Naive thymus-derived CD4-positive, alpha-beta T cell (primary cell): ENCODE measurements at regions of chr13 and their contacts with region 1.

Region 1: DNA sequence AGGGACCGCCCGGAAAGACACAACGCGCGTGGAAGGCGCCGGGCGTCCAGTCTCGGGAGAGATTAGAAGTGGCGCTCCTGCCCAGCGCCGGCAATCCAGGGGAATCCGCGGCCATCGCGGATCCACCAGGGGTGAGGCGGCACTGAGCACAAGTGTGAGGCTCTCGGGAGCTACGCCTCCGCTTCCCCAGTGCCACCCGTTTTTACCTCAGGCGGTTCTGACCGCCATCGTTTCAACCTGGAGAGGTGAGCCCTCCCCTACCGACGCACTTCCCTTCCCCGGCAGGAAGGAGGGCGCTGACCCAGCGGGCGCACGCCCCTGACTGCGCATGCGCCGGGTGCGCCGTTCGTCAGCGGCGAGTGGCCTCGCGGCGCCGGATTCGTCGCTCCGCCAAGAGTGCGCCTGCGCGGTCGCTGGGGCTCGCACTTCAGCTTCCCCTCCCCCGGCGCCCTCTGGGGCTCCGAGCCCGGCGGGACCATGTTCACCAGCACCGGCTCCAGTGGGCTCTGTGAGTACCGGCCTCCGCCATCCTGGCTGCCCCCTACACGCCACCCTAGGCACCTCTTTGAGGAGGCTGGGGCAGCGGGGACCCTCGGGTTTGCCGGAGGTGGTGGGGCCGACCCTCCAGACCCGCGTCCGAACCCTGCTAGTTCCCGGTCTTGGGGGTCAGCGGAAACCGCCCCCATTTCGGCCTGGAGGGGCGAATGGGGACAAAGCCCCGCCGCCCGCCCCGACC is at the start of gene UBAC2:
- DNase-seq: peak; percentile 95 to 99 (median 98)
- ATAC-seq: peak; percentile 88
- H3K4me3 ChIP-seq: peak within 1 kb of the TSS; percentile 74
- H3K4me3 Mint-ChIP-seq: peak within 1 kb of the TSS; percentile 90 to 100 (median 97)
- H3K27ac ChIP-seq: peak within 1 kb of the TSS; percentile 99
- H3K27ac Mint-ChIP-seq: peak within 1 kb of the TSS; percentile 92 to 98 (median 95)
- H3K4me1 ChIP-seq: peaks cover 38 to 51% of the 10 kb centered on the region in 2 donors
- H3K4me1 Mint-ChIP-seq: peaks cover 42 to 74% (median 61%) of the 10 kb centered on the region in 7 donors
- H3K27me3 ChIP-seq: no peaks in the 10 kb centered on the region
- H3K27me3 Mint-ChIP-seq: peaks cover 0 to 2% (median 0%) of the 10 kb centered on the region in 5 donors
- total RNA-seq, gene UBAC2: 63.3 to 114 (median 90.2) TPM

Region 2: DNA sequence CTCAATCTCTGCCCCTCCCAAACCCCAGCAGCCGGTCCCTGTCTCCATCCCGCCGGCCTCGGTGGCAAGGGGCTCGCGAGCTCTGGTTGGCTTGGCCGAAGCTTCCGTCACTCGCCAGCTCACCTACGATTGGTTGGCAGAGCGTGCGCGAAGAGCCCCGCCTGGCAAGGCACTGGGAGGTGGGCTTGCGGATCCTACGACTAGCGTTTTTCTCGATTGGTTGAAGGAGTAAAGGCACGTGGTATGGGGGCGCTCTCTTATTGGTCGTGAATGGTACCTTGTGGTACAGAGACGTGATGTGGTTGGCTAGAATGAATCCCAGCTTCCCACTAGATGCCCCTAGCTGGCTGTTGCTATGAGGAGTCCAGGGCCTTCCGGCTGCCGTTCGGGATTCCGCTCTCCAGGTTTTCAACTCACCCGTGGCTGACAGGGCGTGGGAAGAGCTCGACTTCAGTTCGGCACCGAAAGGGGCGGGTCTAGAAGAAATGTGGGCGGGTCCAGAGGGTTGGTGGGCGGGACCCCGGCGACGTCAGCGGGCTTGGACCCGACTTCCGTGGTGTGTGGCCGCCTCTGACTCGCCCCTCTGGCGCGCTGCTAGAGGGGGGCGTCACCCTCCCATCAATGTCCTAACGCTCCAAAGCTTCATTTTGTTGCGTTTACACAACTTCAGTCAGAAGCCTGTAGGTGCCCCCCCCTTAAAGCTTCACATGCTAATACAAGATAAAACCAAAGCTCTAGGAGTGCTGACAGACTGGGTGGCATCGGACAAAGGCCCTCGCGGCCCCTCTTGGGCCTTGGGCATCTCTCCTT is 1767.5 kb before region 1 on chr13:
- CTCF ChIA-PET with region 1: no interaction called
- POLR2A ChIA-PET with region 1: no interaction called
- intact Hi-C with region 1: loop called in 1 of 2 experiments (anchors 5 kb)
- DNase-seq: peak; percentile 97 to 99 (median 99)
- ATAC-seq: peak; percentile 85
- H3K4me3 ChIP-seq: peak overlapping the region; percentile 93
- H3K4me3 Mint-ChIP-seq: peak overlapping the region; percentile 90 to 99 (median 96)
- H3K27ac ChIP-seq: peak overlapping the region; percentile 100
- H3K27ac Mint-ChIP-seq: peak overlapping the region; percentile 98 to 100 (median 100)
- H3K4me1 ChIP-seq: peaks cover 0 to 8% of the 10 kb centered on the region in 2 donors
- H3K4me1 Mint-ChIP-seq: peaks cover 13 to 36% (median 30%) of the 10 kb centered on the region in 7 donors
- H3K27me3 ChIP-seq: no peaks in the 10 kb centered on the region
- H3K27me3 Mint-ChIP-seq: peaks cover 0 to 11% (median 7%) of the 10 kb centered on the region in 5 donors

Region 3: GRCh38 chr13:99214232-99214631 is 13.6 kb after region 1 on chr13:
- CTCF ChIA-PET with region 1: interaction called, 13 read pairs
- POLR2A ChIA-PET with region 1: interaction called, 273 read pairs
- intact Hi-C with region 1: loop called (anchors 1 kb)
- DNase-seq: peak in 4 of 9 donors; percentile 34 to 53 (median 46)
- ATAC-seq: no peak
- H3K4me3 ChIP-seq: peak overlapping the region; percentile 53
- H3K4me3 Mint-ChIP-seq: peak overlapping the region; percentile 69 to 95 (median 92)
- H3K27ac ChIP-seq: peak overlapping the region; percentile 85
- H3K27ac Mint-ChIP-seq: peak overlapping the region; percentile 94 to 100 (median 99)
- H3K4me1 ChIP-seq: peaks cover 46 to 67% of the 10 kb centered on the region in 2 donors
- H3K4me1 Mint-ChIP-seq: peaks cover 49 to 93% (median 79%) of the 10 kb centered on the region in 7 donors
- H3K27me3 ChIP-seq: no peaks in the 10 kb centered on the region
- H3K27me3 Mint-ChIP-seq: no peaks in the 10 kb centered on the region

Region 4: GRCh38 chr13:99237981-99238662 is 37.5 kb after region 1 on chr13:
- CTCF ChIA-PET with region 1: interaction called, 4 read pairs
- POLR2A ChIA-PET with region 1: interaction called, 23 read pairs
- intact Hi-C with region 1: loop called (anchors 1 to 2 kb)
- DNase-seq: peak in 4 of 9 donors; percentile 19 to 40 (median 30)
- ATAC-seq: peak; percentile 74
- H3K4me3 ChIP-seq: peak overlapping the region; percentile 26
- H3K4me3 Mint-ChIP-seq: peak overlapping the region; percentile 74 to 95 (median 85)
- H3K27ac ChIP-seq: peak overlapping the region; percentile 81
- H3K27ac Mint-ChIP-seq: peak overlapping the region; percentile 86 to 100 (median 97)
- H3K4me1 ChIP-seq: peaks cover 11 to 20% of the 10 kb centered on the region in 2 donors
- H3K4me1 Mint-ChIP-seq: peaks cover 35 to 81% (median 72%) of the 10 kb centered on the region in 7 donors
- H3K27me3 ChIP-seq: no peaks in the 10 kb centered on the region
- H3K27me3 Mint-ChIP-seq: no peaks in the 10 kb centered on the region

Region 5: DNA sequence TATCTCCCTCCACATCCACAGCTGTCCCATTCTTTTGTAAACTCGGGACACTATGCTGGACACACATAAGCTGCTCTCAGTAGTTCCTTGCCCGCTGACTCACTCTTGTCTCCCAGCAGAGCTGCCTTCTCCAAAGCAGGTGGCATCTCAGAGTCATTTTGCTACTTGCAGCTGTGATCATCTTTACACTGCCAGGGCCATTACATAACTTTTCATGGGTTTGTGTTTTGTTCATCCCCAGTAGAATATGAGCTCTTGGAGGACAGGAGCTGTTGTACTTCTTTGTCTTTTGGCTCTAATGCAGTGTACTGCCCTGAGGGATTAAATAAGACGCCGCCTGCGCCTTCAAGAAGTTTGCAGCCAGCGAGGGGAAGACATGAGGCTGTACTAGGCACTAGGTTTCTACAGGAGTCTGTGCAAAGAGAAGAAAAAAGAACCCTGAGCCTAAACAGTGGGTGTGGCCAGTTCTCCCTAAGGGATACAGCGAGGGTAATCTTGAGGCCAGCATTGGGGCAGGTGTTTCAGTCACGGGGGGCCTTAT is 147.4 kb after region 1 on chr13:
- CTCF ChIA-PET with region 1: no interaction called
- POLR2A ChIA-PET with region 1: interaction called, 13 read pairs
- intact Hi-C with region 1: no loop called
- DNase-seq: no peak
- ATAC-seq: no peak
- H3K4me3 ChIP-seq: no peak overlapping the region
- H3K4me3 Mint-ChIP-seq: peak overlapping the region in 2 of 10 donors; percentile 17 to 48
- H3K27ac ChIP-seq: peak overlapping the region; percentile 41
- H3K27ac Mint-ChIP-seq: peak overlapping the region; percentile 30 to 99 (median 96)
- H3K4me1 ChIP-seq: peaks cover 30 to 36% of the 10 kb centered on the region in 2 donors
- H3K4me1 Mint-ChIP-seq: peaks cover 42 to 98% (median 89%) of the 10 kb centered on the region in 7 donors
- H3K27me3 ChIP-seq: no peaks in the 10 kb centered on the region
- H3K27me3 Mint-ChIP-seq: no peaks in the 10 kb centered on the region

Region 6: GRCh38 chr13:99386911-99387788 is 186.6 kb after region 1 on chr13:
- CTCF ChIA-PET with region 1: interaction called, 5 read pairs
- POLR2A ChIA-PET with region 1: interaction called, 5 read pairs
- intact Hi-C with region 1: loop called (anchors 2 to 5 kb)
- DNase-seq: peak; percentile 74 to 89 (median 84)
- ATAC-seq: peak; percentile 65
- H3K4me3 ChIP-seq: no peak overlapping the region
- H3K4me3 Mint-ChIP-seq: peak overlapping the region in 9 of 10 donors; percentile 2 to 73 (median 62)
- H3K27ac ChIP-seq: peak overlapping the region; percentile 85
- H3K27ac Mint-ChIP-seq: peak overlapping the region; percentile 44 to 99 (median 98)
- H3K4me1 ChIP-seq: peaks cover 59 to 65% of the 10 kb centered on the region in 2 donors
- H3K4me1 Mint-ChIP-seq: peaks cover 35 to 83% (median 76%) of the 10 kb centered on the region in 7 donors
- H3K27me3 ChIP-seq: no peaks in the 10 kb centered on the region
- H3K27me3 Mint-ChIP-seq: no peaks in the 10 kb centered on the region